ENCODE measurements at regions of chr22 and their contacts with region 1.

Region 1: GRCh38 chr22:38230108-38230825 is 28.5 kb downstream of the MAFF start:
- DNase-seq: peak in 7 of 9 experiments; percentile 10 to 73 (median 47)
- ATAC-seq: peak; percentile 67
- H3K4me3 ChIP-seq: no peak overlapping the region
- H3K4me3 Mint-ChIP-seq: no peak overlapping the region
- H3K27ac ChIP-seq: peak overlapping the region in 1 of 2 experiments; percentile 31
- H3K27ac Mint-ChIP-seq: no peak overlapping the region
- H3K4me1 ChIP-seq: peaks cover 3% of the 10 kb centered on the region
- H3K4me1 Mint-ChIP-seq: no peaks in the 10 kb centered on the region
- H3K27me3 ChIP-seq: no peaks in the 10 kb centered on the region
- H3K27me3 Mint-ChIP-seq: no peaks in the 10 kb centered on the region
- CTCF ChIP-seq: peak; percentile 29

Region 2: GRCh38 chr22:38088629-38089473 is 141.4 kb before region 1 on chr22:
- CTCF ChIA-PET with region 1: no interaction called
- POLR2A ChIA-PET with region 1: no interaction called
- intact Hi-C with region 1: no loop called
- DNase-seq: no peak
- ATAC-seq: no peak
- H3K4me3 ChIP-seq: no peak overlapping the region
- H3K4me3 Mint-ChIP-seq: no peak overlapping the region
- H3K27ac ChIP-seq: no peak overlapping the region
- H3K27ac Mint-ChIP-seq: no peak overlapping the region
- H3K4me1 ChIP-seq: no peaks in the 10 kb centered on the region
- H3K4me1 Mint-ChIP-seq: no peaks in the 10 kb centered on the region
- H3K27me3 ChIP-seq: no peaks in the 10 kb centered on the region
- H3K27me3 Mint-ChIP-seq: peaks cover 20% of the 10 kb centered on the region
- CTCF ChIP-seq: no peak

Region 3: DNA sequence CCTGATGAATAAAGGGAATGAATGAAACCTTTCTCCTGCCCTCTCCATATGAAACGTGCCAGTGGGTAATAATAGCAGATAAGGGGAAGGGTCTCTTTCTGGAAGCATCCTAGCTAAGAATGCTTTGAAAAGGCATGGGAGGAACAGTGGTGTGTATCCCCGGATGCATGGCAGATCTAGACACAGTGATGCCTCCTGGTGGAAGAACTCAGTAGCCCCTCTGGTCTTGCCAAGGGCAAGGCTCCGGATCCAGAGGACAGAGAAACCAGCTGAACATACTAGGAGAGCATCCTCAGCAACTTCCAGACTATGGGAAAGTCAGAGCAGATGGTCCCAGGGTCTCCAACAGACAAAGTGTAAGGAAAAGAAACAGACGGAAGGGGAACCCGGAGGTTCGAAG is 126.2 kb before region 1 on chr22:
- CTCF ChIA-PET with region 1: interaction called, 6 read pairs
- POLR2A ChIA-PET with region 1: no interaction called
- intact Hi-C with region 1: loop called in 1 of 2 experiments (anchors 1 kb)
- DNase-seq: peak in 2 of 9 experiments; percentile 8 to 25
- ATAC-seq: no peak
- H3K4me3 ChIP-seq: no peak overlapping the region
- H3K4me3 Mint-ChIP-seq: no peak overlapping the region
- H3K27ac ChIP-seq: no peak overlapping the region
- H3K27ac Mint-ChIP-seq: no peak overlapping the region
- H3K4me1 ChIP-seq: no peaks in the 10 kb centered on the region
- H3K4me1 Mint-ChIP-seq: peaks cover 9% of the 10 kb centered on the region
- H3K27me3 ChIP-seq: no peaks in the 10 kb centered on the region
- H3K27me3 Mint-ChIP-seq: no peaks in the 10 kb centered on the region
- CTCF ChIP-seq: no peak

Region 4: DNA sequence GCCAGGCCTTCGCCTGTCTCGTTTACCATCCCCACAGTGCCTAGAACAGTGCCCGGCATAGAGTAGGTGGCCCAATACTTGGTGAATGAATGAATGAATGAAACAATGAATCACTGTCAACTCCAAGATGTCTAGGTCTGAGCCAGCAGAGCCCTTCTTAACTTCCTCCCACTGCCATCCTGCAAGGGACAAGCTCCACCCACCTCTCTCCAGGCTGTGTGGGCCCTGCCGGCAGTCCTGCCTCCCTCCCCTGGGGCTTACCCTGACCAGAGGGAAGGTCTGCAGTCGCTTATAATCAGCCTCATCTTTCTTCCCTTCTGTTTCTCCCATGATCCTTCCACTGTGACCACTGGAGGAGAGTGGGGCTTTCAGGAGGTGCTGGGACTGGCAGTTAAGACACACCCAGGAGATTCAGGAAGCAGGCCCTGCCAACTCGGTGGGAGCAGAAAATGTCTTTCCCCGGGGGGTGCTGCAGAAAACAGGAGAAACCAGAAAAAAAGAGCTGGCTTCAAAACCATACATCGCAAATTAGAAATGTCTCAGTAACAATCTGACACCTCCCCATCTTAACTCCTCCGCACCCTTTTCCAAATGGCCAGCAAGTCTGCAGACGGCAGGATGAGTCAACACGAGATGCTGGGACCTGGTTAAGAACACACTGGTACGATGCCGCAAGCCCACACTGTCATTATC is 552.3 kb after region 1 on chr22:
- CTCF ChIA-PET with region 1: no interaction called
- POLR2A ChIA-PET with region 1: no interaction called
- intact Hi-C with region 1: no loop called
- DNase-seq: no peak
- ATAC-seq: no peak
- H3K4me3 ChIP-seq: no peak overlapping the region
- H3K4me3 Mint-ChIP-seq: no peak overlapping the region
- H3K27ac ChIP-seq: no peak overlapping the region
- H3K27ac Mint-ChIP-seq: no peak overlapping the region
- H3K4me1 ChIP-seq: no peaks in the 10 kb centered on the region
- H3K4me1 Mint-ChIP-seq: peaks cover 5% of the 10 kb centered on the region
- H3K27me3 ChIP-seq: no peaks in the 10 kb centered on the region
- H3K27me3 Mint-ChIP-seq: no peaks in the 10 kb centered on the region
- CTCF ChIP-seq: no peak